Naive thymus-derived CD4-positive, alpha-beta T cell (primary cell): ENCODE measurements at regions of chr2 and their contacts with region 1.

Region 1: DNA sequence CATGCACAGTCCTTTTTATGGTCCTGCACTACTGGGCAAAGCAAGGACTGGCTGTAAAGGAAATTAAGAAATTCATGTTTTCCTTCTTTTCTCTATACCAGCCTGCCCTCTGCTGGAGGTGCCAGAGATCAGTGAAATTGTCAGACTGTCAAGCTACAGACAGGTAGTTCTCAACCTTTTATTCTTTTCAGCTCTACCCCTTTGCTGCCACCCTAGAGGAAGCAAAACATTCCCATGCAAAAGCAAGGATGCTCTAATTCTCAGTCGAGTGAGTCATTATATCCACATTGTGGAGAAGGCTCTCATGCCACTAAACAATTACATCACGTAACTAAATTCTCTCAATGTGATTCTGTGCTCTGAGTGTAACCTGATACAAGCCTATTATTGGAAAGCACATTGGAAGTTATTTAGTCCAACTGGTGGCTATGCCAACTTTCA is 25.0 kb upstream of the RAPGEF4 start:
- DNase-seq: peak in 7 of 9 donors; percentile 16 to 51 (median 46)
- ATAC-seq: peak; percentile 61
- H3K4me3 ChIP-seq: no peak overlapping the region
- H3K4me3 Mint-ChIP-seq: no peak overlapping the region
- H3K27ac ChIP-seq: no peak overlapping the region
- H3K27ac Mint-ChIP-seq: no peak overlapping the region
- H3K4me1 ChIP-seq: no peaks in the 10 kb centered on the region
- H3K4me1 Mint-ChIP-seq: no peaks in the 10 kb centered on the region
- H3K27me3 ChIP-seq: no peaks in the 10 kb centered on the region
- H3K27me3 Mint-ChIP-seq: peaks cover 0 to 25% (median 4%) of the 10 kb centered on the region in 5 donors

Region 2: GRCh38 chr2:171574149-171574795 is 1136.3 kb before region 1 on chr2:
- CTCF ChIA-PET with region 1: interaction called, 3 read pairs
- POLR2A ChIA-PET with region 1: no interaction called
- intact Hi-C with region 1: loop called (anchors 1 to 10 kb)
- DNase-seq: peak; percentile 50 to 84 (median 73)
- ATAC-seq: peak; percentile 99
- H3K4me3 ChIP-seq: no peak overlapping the region
- H3K4me3 Mint-ChIP-seq: peak overlapping the region in 6 of 10 donors; percentile 13 to 69 (median 16)
- H3K27ac ChIP-seq: no peak overlapping the region
- H3K27ac Mint-ChIP-seq: peak overlapping the region in 2 of 9 donors; percentile 31 to 60
- H3K4me1 ChIP-seq: peaks cover 0 to 3% of the 10 kb centered on the region in 2 donors
- H3K4me1 Mint-ChIP-seq: peaks cover 0 to 7% (median 6%) of the 10 kb centered on the region in 7 donors
- H3K27me3 ChIP-seq: no peaks in the 10 kb centered on the region
- H3K27me3 Mint-ChIP-seq: peaks cover 0 to 8% (median 0%) of the 10 kb centered on the region in 5 donors

Region 3: GRCh38 chr2:171703574-171704347 is 1006.8 kb before region 1 on chr2:
- CTCF ChIA-PET with region 1: interaction called, 6 read pairs
- POLR2A ChIA-PET with region 1: no interaction called
- intact Hi-C with region 1: loop called in 1 of 2 experiments (anchors 1 kb)
- DNase-seq: peak in 5 of 9 donors; percentile 10 to 35 (median 22)
- ATAC-seq: peak; percentile 61
- H3K4me3 ChIP-seq: no peak overlapping the region
- H3K4me3 Mint-ChIP-seq: no peak overlapping the region
- H3K27ac ChIP-seq: no peak overlapping the region
- H3K27ac Mint-ChIP-seq: peak overlapping the region in 6 of 9 donors; percentile 43 to 79 (median 66)
- H3K4me1 ChIP-seq: no peaks in the 10 kb centered on the region
- H3K4me1 Mint-ChIP-seq: peaks cover 2 to 34% (median 11%) of the 10 kb centered on the region in 7 donors
- H3K27me3 ChIP-seq: no peaks in the 10 kb centered on the region
- H3K27me3 Mint-ChIP-seq: no peaks in the 10 kb centered on the region

Region 4: GRCh38 chr2:172172513-172173173 is 538.0 kb before region 1 on chr2:
- CTCF ChIA-PET with region 1: interaction called, 4 read pairs
- POLR2A ChIA-PET with region 1: no interaction called
- intact Hi-C with region 1: loop called in 1 of 2 experiments (anchors 1 kb)
- DNase-seq: peak; percentile 18 to 74 (median 61)
- ATAC-seq: peak; percentile 97
- H3K4me3 ChIP-seq: peak overlapping the region; percentile 55
- H3K4me3 Mint-ChIP-seq: peak overlapping the region; percentile 69 to 86 (median 79)
- H3K27ac ChIP-seq: peak overlapping the region; percentile 49
- H3K27ac Mint-ChIP-seq: peak overlapping the region in 4 of 9 donors; percentile 12 to 68 (median 47)
- H3K4me1 ChIP-seq: peaks cover 0 to 3% of the 10 kb centered on the region in 2 donors
- H3K4me1 Mint-ChIP-seq: peaks cover 6 to 10% (median 6%) of the 10 kb centered on the region in 7 donors
- H3K27me3 ChIP-seq: no peaks in the 10 kb centered on the region
- H3K27me3 Mint-ChIP-seq: peaks cover 0 to 53% (median 0%) of the 10 kb centered on the region in 5 donors

Region 5: DNA sequence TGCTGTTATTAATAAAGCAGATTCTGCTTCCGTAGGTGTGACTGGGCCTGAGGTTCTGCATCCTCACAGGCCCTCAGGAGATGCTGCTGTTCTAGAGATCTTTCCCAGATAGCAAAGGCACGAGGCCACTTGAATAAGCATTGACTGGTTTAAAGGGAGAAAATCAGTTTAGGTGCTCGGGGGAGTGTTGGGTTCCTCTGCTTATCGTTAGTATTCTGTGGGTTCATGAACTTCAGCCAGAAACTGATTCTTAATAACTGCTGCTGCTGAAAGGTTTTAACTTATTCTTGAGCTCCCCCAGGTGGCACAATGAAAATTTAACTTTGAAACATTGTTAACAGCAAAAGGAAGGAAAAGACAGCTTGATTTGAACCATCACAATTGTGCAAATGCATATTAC is 226.4 kb before region 1 on chr2:
- CTCF ChIA-PET with region 1: interaction called, 3 read pairs
- POLR2A ChIA-PET with region 1: no interaction called
- intact Hi-C with region 1: loop called in 1 of 2 experiments (anchors 1 kb)
- DNase-seq: peak in 7 of 9 donors; percentile 46 to 68 (median 61)
- ATAC-seq: peak; percentile 66
- H3K4me3 ChIP-seq: no peak overlapping the region
- H3K4me3 Mint-ChIP-seq: peak overlapping the region in 8 of 10 donors; percentile 1 to 81 (median 41)
- H3K27ac ChIP-seq: peak overlapping the region; percentile 16
- H3K27ac Mint-ChIP-seq: peak overlapping the region in 8 of 9 donors; percentile 76 to 94 (median 84)
- H3K4me1 ChIP-seq: peaks cover 0 to 58% of the 10 kb centered on the region in 2 donors
- H3K4me1 Mint-ChIP-seq: peaks cover 27 to 92% (median 77%) of the 10 kb centered on the region in 7 donors
- H3K27me3 ChIP-seq: no peaks in the 10 kb centered on the region
- H3K27me3 Mint-ChIP-seq: no peaks in the 10 kb centered on the region

Region 6: DNA sequence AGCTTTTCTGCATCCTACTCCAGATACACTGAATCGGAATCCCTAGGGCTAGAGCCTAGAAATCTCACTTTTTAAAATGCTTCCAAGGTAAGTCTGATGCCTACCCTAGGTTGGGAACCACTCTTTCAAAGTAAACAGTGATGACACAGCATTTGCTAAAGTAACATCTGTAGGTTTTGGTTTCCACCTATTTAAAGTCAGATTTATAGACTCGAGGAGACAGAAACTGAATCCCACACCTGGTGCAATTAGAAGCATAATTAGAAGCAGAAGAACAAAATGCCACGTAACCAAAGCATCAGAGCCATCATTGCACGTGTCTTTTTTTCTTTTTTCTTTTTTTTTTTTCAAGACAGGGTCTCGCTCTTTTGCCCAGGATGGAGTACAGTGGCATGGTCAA is 113.8 kb before region 1 on chr2:
- CTCF ChIA-PET with region 1: interaction called, 5 read pairs
- POLR2A ChIA-PET with region 1: no interaction called
- intact Hi-C with region 1: loop called (anchors 1 kb)
- DNase-seq: no peak
- ATAC-seq: no peak
- H3K4me3 ChIP-seq: no peak overlapping the region
- H3K4me3 Mint-ChIP-seq: no peak overlapping the region
- H3K27ac ChIP-seq: no peak overlapping the region
- H3K27ac Mint-ChIP-seq: no peak overlapping the region
- H3K4me1 ChIP-seq: no peaks in the 10 kb centered on the region
- H3K4me1 Mint-ChIP-seq: peaks cover 2 to 56% (median 35%) of the 10 kb centered on the region in 7 donors
- H3K27me3 ChIP-seq: no peaks in the 10 kb centered on the region
- H3K27me3 Mint-ChIP-seq: no peaks in the 10 kb centered on the region

Region 7: GRCh38 chr2:172792698-172793097 is 82.1 kb after region 1 on chr2:
- CTCF ChIA-PET with region 1: no interaction called
- POLR2A ChIA-PET with region 1: no interaction called
- intact Hi-C with region 1: no loop called
- DNase-seq: no peak
- ATAC-seq: no peak
- H3K4me3 ChIP-seq: no peak overlapping the region
- H3K4me3 Mint-ChIP-seq: no peak overlapping the region
- H3K27ac ChIP-seq: no peak overlapping the region
- H3K27ac Mint-ChIP-seq: no peak overlapping the region
- H3K4me1 ChIP-seq: no peaks in the 10 kb centered on the region
- H3K4me1 Mint-ChIP-seq: no peaks in the 10 kb centered on the region
- H3K27me3 ChIP-seq: no peaks in the 10 kb centered on the region
- H3K27me3 Mint-ChIP-seq: peaks cover 0 to 13% (median 5%) of the 10 kb centered on the region in 5 donors